ENCODE measurements at regions of chr9 and their contacts with region 1.

Region 1: DNA sequence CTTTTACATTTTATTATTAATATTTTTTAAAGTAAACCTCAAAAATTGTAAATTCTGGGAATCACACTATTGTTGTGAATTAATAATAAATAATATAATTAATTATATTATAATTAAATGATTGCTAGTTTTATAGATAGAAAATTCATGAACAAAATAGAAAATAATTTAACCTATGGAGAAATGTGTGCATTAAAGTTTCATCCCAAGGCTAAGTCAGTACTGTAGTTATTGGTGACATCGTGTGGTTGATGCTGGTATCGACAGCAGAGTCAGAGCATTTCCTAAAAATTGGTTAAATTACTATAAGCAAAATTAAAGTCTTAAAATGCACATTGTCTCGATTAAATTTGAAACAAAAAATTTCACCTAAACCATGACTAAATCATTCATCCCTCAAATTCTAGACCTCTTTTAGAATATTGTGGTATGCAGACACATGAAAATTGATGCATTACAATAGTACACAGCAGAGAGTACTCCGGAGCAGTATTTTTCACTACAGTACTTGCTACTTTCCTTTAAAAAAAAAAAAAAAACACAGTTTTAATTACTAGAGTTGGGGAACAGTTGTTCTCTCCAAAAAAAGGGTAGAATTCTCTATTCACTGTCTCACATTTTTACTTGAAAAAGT is 73.9 kb downstream of the RORB start:
- DNase-seq: peak; percentile 15
- ATAC-seq: no peak
- H3K4me3 ChIP-seq: no peak overlapping the region
- H3K27ac ChIP-seq: no peak overlapping the region
- H3K4me1 ChIP-seq: no peaks in the 10 kb centered on the region
- H3K27me3 ChIP-seq: peaks cover 0 to 6% of the 10 kb centered on the region in 2 experiments; a peak in 1 of 5 replicates
- CTCF ChIP-seq: peak; percentile 62
- EP300 ChIP-seq: no peak
- POLR2A ChIP-seq: no peak
- RAD21 ChIP-seq: no peak

Region 2: GRCh38 chr9:72978744-72979143 is 1592.3 kb before region 1 on chr9:
- CTCF ChIA-PET with region 1: no interaction called
- POLR2A ChIA-PET with region 1: no interaction called
- in situ Hi-C with region 1: no loop called
- intact Hi-C with region 1: no loop called
- DNase-seq: no peak
- ATAC-seq: no peak
- H3K4me3 ChIP-seq: no peak overlapping the region
- H3K27ac ChIP-seq: peak overlapping the region; percentile 48
- H3K4me1 ChIP-seq: peaks cover 61% of the 10 kb centered on the region
- H3K27me3 ChIP-seq: no peaks in the 10 kb centered on the region
- CTCF ChIP-seq: no peak
- EP300 ChIP-seq: no peak
- POLR2A ChIP-seq: no peak
- RAD21 ChIP-seq: no peak

Region 3: GRCh38 chr9:73200694-73201452 is 1370.1 kb before region 1 on chr9:
- CTCF ChIA-PET with region 1: no interaction called
- POLR2A ChIA-PET with region 1: no interaction called
- in situ Hi-C with region 1: no loop called
- intact Hi-C with region 1: loop called (anchors 2 kb)
- DNase-seq: peak; percentile 33
- ATAC-seq: peak; percentile 57
- H3K4me3 ChIP-seq: no peak overlapping the region
- H3K27ac ChIP-seq: no peak overlapping the region
- H3K4me1 ChIP-seq: no peaks in the 10 kb centered on the region
- H3K27me3 ChIP-seq: no peaks in the 10 kb centered on the region
- CTCF ChIP-seq: peak; percentile 54
- EP300 ChIP-seq: no peak
- POLR2A ChIP-seq: no peak
- RAD21 ChIP-seq: no peak

Region 4: DNA sequence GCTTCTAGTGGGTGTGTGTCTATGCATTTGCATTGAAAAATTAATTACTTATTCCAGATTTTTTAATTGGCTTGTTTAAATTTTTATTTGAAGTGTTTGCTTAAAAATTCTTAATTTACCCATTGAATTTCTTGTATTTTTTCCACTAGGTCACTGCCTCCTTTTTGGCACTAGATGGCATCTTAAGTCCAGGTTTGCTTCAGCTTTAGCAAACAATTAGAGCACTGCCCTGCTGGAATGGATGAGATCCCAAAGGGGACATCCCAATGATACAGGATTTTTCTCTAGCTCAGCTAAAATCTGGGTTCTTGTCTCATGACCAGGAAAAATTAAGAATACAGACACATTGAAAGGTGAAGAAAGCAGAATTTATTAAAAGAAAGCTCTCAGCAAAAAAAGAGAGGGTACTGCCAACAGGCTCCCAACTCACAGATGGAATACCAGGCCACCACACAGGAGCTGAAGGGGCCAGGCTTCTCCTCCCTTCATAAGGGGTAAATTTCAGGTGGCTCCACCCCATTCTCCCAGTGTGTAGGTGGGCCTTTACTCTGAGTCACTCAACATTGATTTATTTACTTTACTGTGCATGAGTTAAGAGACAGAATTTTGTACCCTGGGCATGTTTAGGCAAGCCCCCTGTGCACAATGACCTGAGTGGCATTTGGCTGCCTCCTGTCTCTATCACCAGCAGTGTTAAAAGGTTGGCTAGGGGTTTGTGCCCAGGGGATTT is 887.0 kb before region 1 on chr9:
- CTCF ChIA-PET with region 1: interaction called, 25 read pairs
- POLR2A ChIA-PET with region 1: no interaction called
- in situ Hi-C with region 1: loop called (anchors 5 kb)
- intact Hi-C with region 1: loop called (anchors 1 kb)
- DNase-seq: peak; percentile 55
- ATAC-seq: peak; percentile 94
- H3K4me3 ChIP-seq: no peak overlapping the region
- H3K27ac ChIP-seq: no peak overlapping the region
- H3K4me1 ChIP-seq: peaks cover 10% of the 10 kb centered on the region
- H3K27me3 ChIP-seq: no peaks in the 10 kb centered on the region
- CTCF ChIP-seq: peak; percentile 75
- EP300 ChIP-seq: no peak
- POLR2A ChIP-seq: no peak
- RAD21 ChIP-seq: peak; percentile 56

Region 5: DNA sequence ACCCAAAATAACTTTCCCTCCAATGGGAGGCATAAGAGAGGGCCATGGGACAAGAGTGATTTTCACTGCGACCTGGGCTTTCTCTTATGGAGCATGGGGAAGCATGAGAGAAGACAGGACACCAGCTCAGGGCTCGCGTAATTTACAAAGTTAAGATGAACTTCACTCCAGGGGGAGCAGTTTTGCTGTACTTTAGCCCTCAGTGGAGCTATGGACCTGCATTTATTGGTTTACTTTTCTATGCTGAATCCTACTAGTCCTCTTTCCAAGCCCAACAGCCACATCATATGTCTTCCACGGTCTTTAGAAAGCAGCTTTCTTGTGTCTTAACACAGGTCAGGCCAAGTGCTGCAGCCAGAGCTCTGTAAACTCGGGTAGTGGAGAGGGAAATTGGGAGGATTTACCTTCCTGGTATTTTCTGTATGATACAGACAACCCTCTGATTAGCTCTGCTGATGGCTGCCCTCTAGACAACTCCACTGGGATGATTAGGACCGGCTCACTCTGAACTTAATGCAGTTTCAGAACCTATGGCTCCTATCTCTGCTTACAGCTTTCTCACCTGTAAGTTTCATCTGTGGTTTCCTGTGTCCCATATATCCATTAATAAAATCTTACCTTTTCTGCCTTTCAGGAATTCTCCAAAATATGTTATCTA is 654.9 kb before region 1 on chr9:
- CTCF ChIA-PET with region 1: no interaction called
- POLR2A ChIA-PET with region 1: no interaction called
- in situ Hi-C with region 1: no loop called
- intact Hi-C with region 1: loop called (anchors 2 kb)
- DNase-seq: peak; percentile 29
- ATAC-seq: peak; percentile 97
- H3K4me3 ChIP-seq: no peak overlapping the region
- H3K27ac ChIP-seq: no peak overlapping the region
- H3K4me1 ChIP-seq: no peaks in the 10 kb centered on the region
- H3K27me3 ChIP-seq: no peaks in the 10 kb centered on the region
- CTCF ChIP-seq: peak; percentile 64
- EP300 ChIP-seq: no peak
- POLR2A ChIP-seq: no peak
- RAD21 ChIP-seq: no peak

Region 6: GRCh38 chr9:74322661-74323314 is 248.2 kb before region 1 on chr9:
- CTCF ChIA-PET with region 1: no interaction called
- POLR2A ChIA-PET with region 1: no interaction called
- in situ Hi-C with region 1: no loop called
- intact Hi-C with region 1: no loop called
- DNase-seq: no peak
- ATAC-seq: no peak
- H3K4me3 ChIP-seq: no peak overlapping the region
- H3K27ac ChIP-seq: no peak overlapping the region
- H3K4me1 ChIP-seq: no peaks in the 10 kb centered on the region
- H3K27me3 ChIP-seq: no peaks in the 10 kb centered on the region
- CTCF ChIP-seq: no peak
- EP300 ChIP-seq: no peak
- POLR2A ChIP-seq: no peak
- RAD21 ChIP-seq: no peak

Region 7: GRCh38 chr9:74379718-74380117 is 191.3 kb before region 1 on chr9:
- CTCF ChIA-PET with region 1: no interaction called
- POLR2A ChIA-PET with region 1: no interaction called
- in situ Hi-C with region 1: no loop called
- intact Hi-C with region 1: loop called (anchors 2 kb)
- DNase-seq: peak; percentile 40
- ATAC-seq: peak; percentile 94
- H3K4me3 ChIP-seq: no peak overlapping the region
- H3K27ac ChIP-seq: no peak overlapping the region
- H3K4me1 ChIP-seq: no peaks in the 10 kb centered on the region
- H3K27me3 ChIP-seq: no peaks in the 10 kb centered on the region
- CTCF ChIP-seq: peak; percentile 72
- EP300 ChIP-seq: no peak
- POLR2A ChIP-seq: no peak
- RAD21 ChIP-seq: 0 out of 2 replicates have a peak, but pooled peaks have one; percentile 43

Region 8: GRCh38 chr9:74696520-74696919 is 125.5 kb after region 1 on chr9:
- CTCF ChIA-PET with region 1: no interaction called
- POLR2A ChIA-PET with region 1: no interaction called
- in situ Hi-C with region 1: no loop called
- intact Hi-C with region 1: no loop called
- DNase-seq: no peak
- ATAC-seq: peak; percentile 65
- H3K4me3 ChIP-seq: no peak overlapping the region
- H3K27ac ChIP-seq: no peak overlapping the region
- H3K4me1 ChIP-seq: no peaks in the 10 kb centered on the region
- H3K27me3 ChIP-seq: no peaks in the 10 kb centered on the region
- CTCF ChIP-seq: no peak
- EP300 ChIP-seq: no peak
- POLR2A ChIP-seq: no peak
- RAD21 ChIP-seq: no peak

Region 9: DNA sequence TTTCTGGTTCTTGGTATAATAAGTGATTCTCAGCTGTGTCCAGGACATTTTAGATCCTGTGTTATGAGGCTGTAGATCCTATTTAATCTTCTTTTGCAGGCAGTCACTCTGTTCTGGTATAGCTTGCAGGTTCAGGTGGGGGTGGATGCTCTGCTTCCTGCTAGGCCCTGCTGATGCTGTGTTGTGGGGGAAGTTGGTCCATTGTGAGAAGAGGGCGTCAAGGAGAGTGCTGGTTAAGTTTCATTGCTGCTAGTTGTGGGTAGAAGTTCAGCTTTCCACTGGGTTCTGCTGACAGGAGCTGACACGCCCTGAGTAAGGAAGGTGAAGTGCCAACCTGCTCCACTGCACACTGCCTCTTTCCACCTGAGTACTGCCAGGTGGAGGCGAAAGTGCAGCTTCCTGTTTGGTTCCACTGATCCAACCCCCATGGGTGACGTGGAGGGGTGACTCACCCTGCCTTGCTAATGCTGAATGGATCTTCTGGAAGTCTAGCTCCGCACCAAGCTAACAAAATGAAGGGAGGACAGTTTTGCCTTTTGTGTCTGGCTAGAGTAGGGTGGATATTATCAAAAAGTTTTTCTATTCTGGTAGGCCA is 500.6 kb after region 1 on chr9:
- CTCF ChIA-PET with region 1: no interaction called
- POLR2A ChIA-PET with region 1: no interaction called
- in situ Hi-C with region 1: no loop called
- intact Hi-C with region 1: loop called (anchors 10 kb)
- DNase-seq: no peak
- ATAC-seq: no peak
- H3K4me3 ChIP-seq: no peak overlapping the region
- H3K27ac ChIP-seq: no peak overlapping the region
- H3K4me1 ChIP-seq: no peaks in the 10 kb centered on the region
- H3K27me3 ChIP-seq: no peaks in the 10 kb centered on the region
- CTCF ChIP-seq: no peak
- EP300 ChIP-seq: no peak
- POLR2A ChIP-seq: no peak
- RAD21 ChIP-seq: no peak